Activated CD4-positive, alpha-beta memory T cell treated with anti-CD3 and anti-CD28 coated beads for 36 hours (primary cell): ENCODE measurements at regions of chr4 and their contacts with region 1.

Region 1: DNA sequence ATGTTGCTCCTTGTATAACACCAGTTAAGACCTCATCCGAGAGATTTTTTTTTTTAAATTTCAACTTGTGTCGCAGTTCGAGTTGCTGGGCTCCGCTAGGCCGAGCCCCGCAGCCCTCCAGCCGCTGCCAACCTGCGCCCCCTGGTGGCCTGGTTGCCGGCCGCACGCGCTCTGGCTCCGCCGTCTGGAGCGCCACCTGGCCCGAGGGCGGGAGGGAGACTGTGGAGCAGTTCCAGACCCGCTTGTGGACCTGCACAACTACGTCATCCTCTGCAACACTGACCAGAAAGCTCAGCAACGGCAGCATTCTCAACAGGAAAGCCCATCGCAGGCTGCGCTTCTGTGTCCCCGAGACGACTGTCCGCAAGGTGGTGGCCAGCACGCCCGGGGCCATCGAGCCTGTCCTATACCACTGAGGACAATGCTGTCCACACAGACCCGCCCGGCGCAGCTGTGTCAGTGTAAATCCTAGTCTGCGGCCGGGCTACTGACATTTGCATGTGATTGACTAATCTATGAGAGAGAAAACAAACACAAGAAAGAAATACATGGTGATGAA is 39.1 kb downstream of the ARL9 start:
- DNase-seq: peak; percentile 90
- H3K4me3 Mint-ChIP-seq: peak overlapping the region; percentile 42
- H3K27ac Mint-ChIP-seq: no peak overlapping the region
- H3K4me1 Mint-ChIP-seq: peaks cover 13% of the 10 kb centered on the region
- H3K27me3 Mint-ChIP-seq: peaks cover 8% of the 10 kb centered on the region

Region 2: GRCh38 chr4:56505269-56506130 is 39.2 kb before region 1 on chr4 and contains the start of gene ARL9:
- CTCF ChIA-PET with region 1: interaction called, 4 read pairs
- POLR2A ChIA-PET with region 1: no interaction called
- intact Hi-C with region 1: loop called (anchors 5 kb)
- DNase-seq: peak; percentile 67
- H3K4me3 Mint-ChIP-seq: peak within 1 kb of the TSS; percentile 73
- H3K27ac Mint-ChIP-seq: no peak within 1 kb of the TSS
- H3K4me1 Mint-ChIP-seq: peaks cover 18% of the 10 kb centered on the region
- H3K27me3 Mint-ChIP-seq: peaks cover 8% of the 10 kb centered on the region
- total RNA-seq, gene ARL9: not detected

Region 3: DNA sequence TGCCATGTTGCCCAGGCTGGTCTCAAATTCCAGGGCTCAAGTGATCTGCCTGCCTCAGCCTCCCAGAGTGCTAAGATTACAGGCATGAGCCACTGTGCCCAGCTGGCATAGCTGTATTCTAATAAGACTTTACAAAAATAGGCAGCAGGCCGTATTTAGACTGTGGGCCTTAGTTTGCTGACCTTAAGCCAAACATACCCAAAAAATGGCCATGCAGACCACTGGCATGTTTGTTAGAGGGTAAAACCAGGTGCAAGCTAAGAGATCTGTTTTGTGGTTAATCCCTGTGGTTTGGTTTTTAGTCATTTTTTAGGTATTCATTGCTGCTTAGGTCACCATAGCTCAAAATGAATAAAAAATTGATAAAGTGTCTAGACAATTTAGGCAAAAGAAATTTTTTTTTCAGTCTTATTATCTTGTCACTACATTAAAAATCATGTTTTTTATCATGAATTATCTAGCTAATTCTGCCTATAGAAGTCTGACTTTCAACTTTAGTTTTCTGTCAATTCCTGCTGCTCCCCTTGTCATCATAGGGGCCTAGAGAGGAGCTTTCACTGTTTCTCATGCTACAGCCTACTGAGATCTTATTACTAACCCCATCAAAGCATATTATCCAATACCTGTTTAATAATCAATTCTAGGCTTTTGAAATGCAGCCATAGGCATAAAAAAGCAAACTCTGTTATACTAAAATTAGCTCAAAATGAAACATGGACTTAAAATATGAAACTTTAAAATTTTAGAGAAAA is 284.3 kb after region 1 on chr4:
- CTCF ChIA-PET with region 1: no interaction called
- POLR2A ChIA-PET with region 1: no interaction called
- intact Hi-C with region 1: loop called (anchors 10 kb)
- DNase-seq: no peak
- H3K4me3 Mint-ChIP-seq: no peak overlapping the region
- H3K27ac Mint-ChIP-seq: no peak overlapping the region
- H3K4me1 Mint-ChIP-seq: no peaks in the 10 kb centered on the region
- H3K27me3 Mint-ChIP-seq: no peaks in the 10 kb centered on the region

Region 4: GRCh38 chr4:56843421-56843899 is 298.8 kb after region 1 on chr4:
- CTCF ChIA-PET with region 1: interaction called, 11 read pairs
- POLR2A ChIA-PET with region 1: no interaction called
- intact Hi-C with region 1: loop called (anchors 10 kb)
- DNase-seq: no peak
- H3K4me3 Mint-ChIP-seq: no peak overlapping the region
- H3K27ac Mint-ChIP-seq: no peak overlapping the region
- H3K4me1 Mint-ChIP-seq: no peaks in the 10 kb centered on the region
- H3K27me3 Mint-ChIP-seq: no peaks in the 10 kb centered on the region